SK-N-SH (cell line): ENCODE measurements at regions of chr20 and their contacts with region 1.

Region 1: GRCh38 chr20:37990571-37991151 is 42.6 kb downstream of the TTI1 start:
- DNase-seq: peak; percentile 67
- H3K4me3 ChIP-seq: no peak overlapping the region
- H3K27ac ChIP-seq: peak overlapping the region in 1 of 2 experiments; percentile 91; a peak in 2 of 4 replicates
- H3K4me1 ChIP-seq: peaks cover 4 to 72% of the 10 kb centered on the region in 2 experiments; a peak in 3 of 4 replicates
- H3K27me3 ChIP-seq: no peaks in the 10 kb centered on the region
- CTCF ChIP-seq: no peak
- EP300 ChIP-seq: peak in 1 of 2 experiments; percentile 92; a peak in 2 of 4 replicates
- RAD21 ChIP-seq: no peak

Region 2: GRCh38 chr20:37880726-37881591 is 109.7 kb before region 1 on chr20:
- CTCF ChIA-PET with region 1: interaction called, 19 read pairs
- POLR2A ChIA-PET with region 1: interaction called, 3 read pairs
- DNase-seq: peak; percentile 96
- H3K4me3 ChIP-seq: no peak overlapping the region
- H3K27ac ChIP-seq: peak overlapping the region in 1 of 2 experiments; percentile 77; a peak in 2 of 4 replicates
- H3K4me1 ChIP-seq: peaks cover 0 to 42% of the 10 kb centered on the region in 2 experiments; a peak in 2 of 4 replicates
- H3K27me3 ChIP-seq: no peaks in the 10 kb centered on the region
- CTCF ChIP-seq: no peak
- EP300 ChIP-seq: peak in 1 of 2 experiments; percentile 95; a peak in 2 of 4 replicates
- RAD21 ChIP-seq: peak; percentile 37

Region 3: GRCh38 chr20:37911838-37912281 is 78.8 kb before region 1 on chr20:
- CTCF ChIA-PET with region 1: interaction called, 33 read pairs
- POLR2A ChIA-PET with region 1: interaction called, 12 read pairs
- DNase-seq: peak; percentile 80
- H3K4me3 ChIP-seq: no peak overlapping the region
- H3K27ac ChIP-seq: peak overlapping the region in 1 of 2 experiments; percentile 47; a peak in 1 of 4 replicates
- H3K4me1 ChIP-seq: peaks cover 21 to 45% of the 10 kb centered on the region in 2 experiments; a peak in 2 of 4 replicates
- H3K27me3 ChIP-seq: peaks cover 8% of the 10 kb centered on the region; the same call in 1 of the 2 replicates
- CTCF ChIP-seq: no peak
- EP300 ChIP-seq: peak in 1 of 2 experiments; percentile 57; a peak in 1 of 4 replicates
- RAD21 ChIP-seq: 0 out of 2 replicates have a peak, but pooled peaks have one; percentile 3

Region 4: GRCh38 chr20:37961016-37961415 is 29.6 kb before region 1 on chr20:
- CTCF ChIA-PET with region 1: no interaction called
- POLR2A ChIA-PET with region 1: no interaction called
- DNase-seq: no peak
- H3K4me3 ChIP-seq: no peak overlapping the region
- H3K27ac ChIP-seq: no peak overlapping the region
- H3K4me1 ChIP-seq: peaks cover 0 to 4% of the 10 kb centered on the region in 2 experiments; a peak in 3 of 4 replicates
- H3K27me3 ChIP-seq: no peaks in the 10 kb centered on the region
- CTCF ChIP-seq: no peak
- EP300 ChIP-seq: no peak
- RAD21 ChIP-seq: no peak

Region 5: DNA sequence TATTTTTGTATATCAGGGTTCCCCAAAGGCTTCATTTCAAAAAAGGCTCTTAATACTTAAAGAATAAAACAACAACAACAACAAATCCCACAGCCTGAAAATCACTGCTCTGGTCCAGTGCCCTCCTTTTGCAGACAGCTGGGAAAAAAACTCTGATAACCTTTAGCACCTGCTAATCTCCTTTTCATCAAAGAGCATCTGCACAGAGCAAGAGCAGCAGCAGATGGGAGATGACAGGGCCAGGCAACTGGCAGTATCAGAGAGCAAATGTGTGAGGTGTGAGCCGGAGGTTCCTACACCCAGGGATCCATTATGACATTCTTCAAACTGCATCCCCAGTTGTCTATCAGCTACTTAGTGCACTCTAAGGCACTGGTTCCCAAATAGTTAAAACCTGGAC is 16.9 kb after region 1 on chr20:
- CTCF ChIA-PET with region 1: interaction called, 24 read pairs
- POLR2A ChIA-PET with region 1: interaction called, 3 read pairs
- DNase-seq: peak; percentile 55
- H3K4me3 ChIP-seq: no peak overlapping the region
- H3K27ac ChIP-seq: no peak overlapping the region
- H3K4me1 ChIP-seq: peaks cover 1 to 11% of the 10 kb centered on the region in 2 experiments; a peak in 2 of 4 replicates
- H3K27me3 ChIP-seq: no peaks in the 10 kb centered on the region
- CTCF ChIP-seq: no peak
- EP300 ChIP-seq: no peak; a peak in 1 of 4 replicates
- RAD21 ChIP-seq: no peak